K562 (cell line): ENCODE measurements at regions of chr7 and their contacts with region 1.

Region 1: DNA sequence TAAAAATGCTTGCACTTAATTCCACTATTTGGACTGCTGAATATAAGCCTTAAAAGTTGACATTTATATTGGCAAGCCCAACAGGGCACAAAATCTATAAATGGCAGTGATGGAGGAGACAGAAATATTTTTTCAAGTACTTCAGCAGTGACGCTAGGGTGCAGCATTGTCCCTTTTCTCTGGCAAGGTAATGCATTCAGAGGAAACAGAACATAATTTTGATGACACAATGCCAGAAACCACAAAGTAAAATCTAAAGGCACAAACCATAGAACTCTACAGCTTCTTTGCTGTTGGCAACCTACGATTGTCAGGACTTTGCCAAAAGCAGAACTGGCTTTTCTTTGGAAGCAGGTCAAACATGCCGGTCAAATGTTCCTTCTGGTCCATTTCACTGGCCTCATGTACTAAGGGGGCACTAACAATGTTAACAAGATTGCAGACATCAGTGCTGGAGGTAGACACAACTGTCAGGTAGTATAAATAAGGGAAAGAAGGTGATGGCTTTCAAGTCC is 30.9 kb upstream of the FAM133B start:
- DNase-seq: peak in 3 of 4 experiments; percentile 32 to 74 (median 40)
- ATAC-seq: peak; percentile 91
- H3K4me3 ChIP-seq: no peak overlapping the region
- H3K27ac ChIP-seq: no peak overlapping the region
- H3K4me1 ChIP-seq: peaks cover 0 to 3% of the 10 kb centered on the region in 2 experiments; a peak in 1 of 5 replicates
- H3K27me3 ChIP-seq: no peaks in the 10 kb centered on the region
- CTCF ChIP-seq: peak; percentile 65 to 94 (median 83); a peak in 5 of 6 replicates
- EP300 ChIP-seq: no peak
- POLR2A ChIP-seq: no peak
- RAD21 ChIP-seq: peak; percentile 93 to 96

Region 2: GRCh38 chr7:92598310-92598981 is 22.6 kb before region 1 on chr7:
- CTCF ChIA-PET with region 1: no interaction called
- POLR2A ChIA-PET with region 1: no interaction called
- in situ Hi-C with region 1: no loop called
- intact Hi-C with region 1: no loop called
- DNase-seq: no peak
- ATAC-seq: no peak
- H3K4me3 ChIP-seq: no peak overlapping the region
- H3K27ac ChIP-seq: no peak overlapping the region
- H3K4me1 ChIP-seq: no peaks in the 10 kb centered on the region
- H3K27me3 ChIP-seq: peaks cover 0 to 4% of the 10 kb centered on the region in 2 experiments; a peak in 1 of 5 replicates
- CTCF ChIP-seq: no peak
- EP300 ChIP-seq: no peak
- POLR2A ChIP-seq: no peak
- RAD21 ChIP-seq: no peak

Region 3: DNA sequence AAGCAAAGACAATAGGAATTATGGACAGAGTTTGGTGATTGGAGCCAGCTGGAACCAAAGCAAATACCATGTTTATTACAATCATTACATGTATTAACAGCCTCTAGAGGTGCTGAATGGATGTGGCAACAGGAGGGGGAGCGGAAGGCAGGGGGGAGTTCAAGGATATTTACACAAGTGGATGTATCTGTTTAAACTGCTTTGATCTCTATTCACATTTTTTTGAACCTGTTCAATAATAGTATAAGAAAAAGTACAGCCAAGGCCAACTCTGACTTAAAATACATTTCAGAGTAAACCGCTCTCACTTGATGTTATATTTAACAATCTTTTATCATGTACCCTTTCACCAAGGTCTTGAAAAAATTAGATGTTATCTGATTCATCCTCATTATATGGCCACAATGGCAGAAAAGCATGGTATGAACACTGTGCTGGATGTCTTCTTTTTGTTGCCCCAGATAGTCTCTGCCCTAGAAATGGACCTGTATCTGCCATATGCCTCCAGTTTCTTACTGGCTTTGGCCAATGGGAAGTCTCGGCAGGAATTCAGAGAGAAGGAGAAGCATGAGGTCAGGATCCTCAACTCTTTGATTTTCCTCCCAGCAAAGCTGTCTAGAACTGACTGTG is 57.3 kb after region 1 on chr7:
- CTCF ChIA-PET with region 1: no interaction called
- POLR2A ChIA-PET with region 1: no interaction called
- in situ Hi-C with region 1: no loop called
- intact Hi-C with region 1: loop called (anchors 5 kb)
- DNase-seq: no peak
- ATAC-seq: no peak
- H3K4me3 ChIP-seq: no peak overlapping the region
- H3K27ac ChIP-seq: no peak overlapping the region
- H3K4me1 ChIP-seq: no peaks in the 10 kb centered on the region
- H3K27me3 ChIP-seq: no peaks in the 10 kb centered on the region
- CTCF ChIP-seq: no peak
- EP300 ChIP-seq: no peak
- POLR2A ChIP-seq: no peak
- RAD21 ChIP-seq: no peak

Region 4: DNA sequence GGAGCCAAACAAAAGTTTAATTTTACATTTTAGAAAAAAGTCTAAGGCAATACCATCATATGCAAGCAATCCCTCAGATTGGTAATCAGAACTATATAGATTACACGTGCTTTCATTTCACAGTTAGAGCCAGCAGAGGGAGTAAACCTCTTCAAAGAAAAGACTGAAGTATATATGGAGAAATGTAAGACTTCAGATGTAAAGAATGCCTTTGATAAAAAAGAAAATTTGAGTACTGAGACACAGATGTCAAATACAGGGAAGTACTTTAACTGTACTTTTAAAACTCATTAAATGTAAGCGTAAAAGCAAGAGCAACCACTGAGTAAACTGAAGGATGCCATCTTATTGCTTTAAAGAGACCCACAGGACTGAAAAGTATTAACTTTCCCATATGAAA is 70.5 kb after region 1 on chr7:
- CTCF ChIA-PET with region 1: no interaction called
- POLR2A ChIA-PET with region 1: no interaction called
- in situ Hi-C with region 1: no loop called
- intact Hi-C with region 1: loop called (anchors 1 kb)
- DNase-seq: peak; percentile 26 to 43 (median 32)
- ATAC-seq: peak; percentile 86
- H3K4me3 ChIP-seq: no peak overlapping the region
- H3K27ac ChIP-seq: no peak overlapping the region
- H3K4me1 ChIP-seq: peaks cover 7 to 11% of the 10 kb centered on the region in 2 experiments; a peak in 3 of 5 replicates
- H3K27me3 ChIP-seq: no peaks in the 10 kb centered on the region
- CTCF ChIP-seq: peak; percentile 25 to 63 (median 28); a peak in 3 of 6 replicates
- EP300 ChIP-seq: no peak
- POLR2A ChIP-seq: no peak
- RAD21 ChIP-seq: peak; percentile 55 to 77

Region 5: GRCh38 chr7:92833024-92833765 is 212.1 kb after region 1 on chr7:
- CTCF ChIA-PET with region 1: interaction called, 4 read pairs
- POLR2A ChIA-PET with region 1: no interaction called
- in situ Hi-C with region 1: no loop called
- intact Hi-C with region 1: loop called (anchors 1 kb)
- DNase-seq: peak; percentile 25 to 71 (median 35)
- ATAC-seq: peak; percentile 13; the same call in 1 of the 3 replicates
- H3K4me3 ChIP-seq: peak overlapping the region; percentile 56
- H3K27ac ChIP-seq: peak overlapping the region; percentile 90
- H3K4me1 ChIP-seq: peaks cover 0 to 31% of the 10 kb centered on the region in 2 experiments; a peak in 3 of 5 replicates
- H3K27me3 ChIP-seq: no peaks in the 10 kb centered on the region
- CTCF ChIP-seq: peak; percentile 43 to 69 (median 54)
- EP300 ChIP-seq: no peak
- POLR2A ChIP-seq: no peak
- RAD21 ChIP-seq: peak in 1 of 2 experiments; percentile 15; a peak in 2 of 4 replicates

Region 6: DNA sequence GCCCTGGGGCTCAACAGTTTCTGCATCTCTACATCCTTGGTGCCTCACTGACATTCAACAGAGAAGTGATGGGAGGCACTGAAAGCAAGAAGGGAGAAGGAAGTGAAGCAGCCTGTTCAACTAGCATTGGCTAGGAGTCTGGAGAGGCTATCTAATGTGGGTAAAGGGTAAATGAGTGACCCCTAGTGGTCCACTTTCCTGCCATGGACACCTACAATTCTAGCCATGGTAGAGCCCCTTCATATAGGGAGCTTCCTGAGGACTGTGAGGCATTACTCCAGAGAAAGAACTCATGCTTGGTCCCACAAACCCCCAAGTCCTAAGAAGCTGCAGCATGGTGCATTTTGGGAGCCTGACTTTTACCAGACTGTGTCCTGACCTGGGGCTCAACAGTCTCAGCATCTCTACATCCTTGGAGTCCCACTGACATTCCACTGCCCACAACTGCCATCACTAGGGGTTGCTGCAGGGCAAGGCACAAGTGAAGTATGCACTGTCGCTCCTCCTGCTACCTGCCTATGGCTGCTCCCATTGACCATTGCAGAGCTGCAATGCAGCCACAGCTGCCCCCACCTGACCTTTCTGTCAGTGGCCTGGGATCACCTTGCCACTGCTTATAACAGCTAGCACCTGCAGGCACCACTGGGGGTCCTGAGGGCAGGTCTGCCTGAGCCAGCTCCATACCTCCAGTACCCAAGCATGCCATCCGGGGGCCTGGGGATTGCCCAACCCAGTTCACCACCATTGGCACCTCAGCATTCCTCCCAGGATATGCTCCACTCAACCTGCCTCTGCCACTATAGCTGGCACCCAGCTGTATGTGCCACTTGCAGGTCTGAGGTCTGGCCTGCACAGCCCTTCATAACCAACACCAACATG is 259.4 kb after region 1 on chr7:
- CTCF ChIA-PET with region 1: interaction called, 5 read pairs
- POLR2A ChIA-PET with region 1: no interaction called
- in situ Hi-C with region 1: no loop called
- intact Hi-C with region 1: loop called (anchors 1 kb)
- DNase-seq: peak in 2 of 4 experiments; percentile 45 to 66
- ATAC-seq: peak; percentile 97
- H3K4me3 ChIP-seq: no peak overlapping the region
- H3K27ac ChIP-seq: no peak overlapping the region
- H3K4me1 ChIP-seq: no peaks in the 10 kb centered on the region
- H3K27me3 ChIP-seq: no peaks in the 10 kb centered on the region
- CTCF ChIP-seq: peak; percentile 53 to 72 (median 54)
- EP300 ChIP-seq: no peak
- POLR2A ChIP-seq: no peak
- RAD21 ChIP-seq: peak; percentile 31 to 81; a peak in 3 of 4 replicates

Region 7: DNA sequence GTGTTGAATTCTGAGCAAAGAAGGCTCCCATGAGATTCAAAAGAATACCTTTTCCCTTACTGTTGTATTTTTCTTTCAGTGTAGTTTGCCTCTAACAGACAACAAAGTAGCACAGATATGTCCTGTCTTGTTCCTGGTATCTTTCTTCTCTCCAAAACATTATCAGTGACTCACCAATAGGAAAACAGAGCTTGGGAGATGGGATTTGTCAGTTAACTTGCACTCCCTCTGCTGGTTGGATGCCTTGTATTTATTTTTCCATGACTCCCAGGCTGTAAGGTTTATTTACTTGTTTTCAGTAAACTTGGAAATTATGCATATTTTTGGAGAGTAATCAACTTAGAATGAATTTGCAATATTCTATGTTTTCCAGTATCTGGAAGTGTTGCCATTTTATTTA is 367.0 kb after region 1 on chr7:
- CTCF ChIA-PET with region 1: no interaction called
- POLR2A ChIA-PET with region 1: no interaction called
- in situ Hi-C with region 1: no loop called
- intact Hi-C with region 1: loop called (anchors 10 kb)
- DNase-seq: peak; percentile 31 to 43 (median 38)
- ATAC-seq: peak; percentile 49; the same call in 2 of the 3 replicates
- H3K4me3 ChIP-seq: no peak overlapping the region
- H3K27ac ChIP-seq: no peak overlapping the region
- H3K4me1 ChIP-seq: peaks cover 0 to 3% of the 10 kb centered on the region in 2 experiments; a peak in 1 of 5 replicates
- H3K27me3 ChIP-seq: no peaks in the 10 kb centered on the region
- CTCF ChIP-seq: peak in 2 of 3 experiments; percentile 30 to 48; a peak in 2 of 6 replicates
- EP300 ChIP-seq: no peak
- POLR2A ChIP-seq: no peak
- RAD21 ChIP-seq: peak in 1 of 2 experiments; percentile 60; a peak in 2 of 4 replicates

Region 8: DNA sequence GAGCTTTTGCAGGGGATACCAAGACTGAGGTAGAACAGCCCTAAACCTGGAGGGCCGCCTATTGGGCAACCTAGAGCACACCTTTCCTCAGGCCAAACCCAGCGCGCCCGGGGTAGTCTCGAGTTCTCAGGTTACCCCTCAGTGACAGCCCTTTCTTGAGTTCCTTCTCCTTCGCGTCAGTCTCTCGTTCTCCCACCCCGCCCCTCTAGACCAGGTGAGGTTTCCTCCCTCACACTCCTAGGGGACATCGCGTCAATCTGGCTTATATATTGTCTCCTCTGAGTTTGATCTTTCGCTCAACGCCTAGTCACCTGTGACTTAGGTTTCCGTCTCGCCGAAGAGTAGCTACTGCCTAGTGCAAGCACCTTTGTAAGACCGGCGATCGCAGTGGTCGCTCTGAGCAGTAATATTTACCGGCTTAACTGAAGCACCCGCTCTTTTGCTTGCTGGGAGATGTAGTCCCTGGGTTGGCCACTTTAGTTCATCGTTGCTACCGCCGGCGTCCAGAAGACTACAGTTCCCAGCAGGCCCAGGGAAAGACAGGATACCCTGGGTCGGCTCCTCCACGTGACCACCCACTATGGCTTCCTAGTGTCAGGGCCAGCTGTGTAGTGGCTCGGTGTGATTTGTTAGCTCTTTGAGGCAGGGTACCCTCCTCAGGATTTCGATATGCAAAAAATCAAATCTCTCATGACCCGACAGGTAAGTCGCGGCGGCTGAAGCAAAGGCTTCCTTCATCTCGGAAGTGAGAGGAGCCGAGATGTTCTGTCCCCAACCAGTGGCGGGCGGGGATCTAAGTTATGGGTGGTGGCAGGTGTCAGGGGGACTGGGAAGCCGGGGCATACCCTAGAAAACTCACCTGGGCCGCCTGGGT is 611.0 kb after region 1 on chr7 and contains the start of gene VPS50:
- CTCF ChIA-PET with region 1: no interaction called
- POLR2A ChIA-PET with region 1: no interaction called
- in situ Hi-C with region 1: no loop called
- intact Hi-C with region 1: loop called (anchors 10 kb)
- DNase-seq: peak; percentile 93 to 97 (median 94)
- ATAC-seq: peak; percentile 98
- H3K4me3 ChIP-seq: peak within 1 kb of the TSS; percentile 62
- H3K27ac ChIP-seq: peak within 1 kb of the TSS; percentile 66
- H3K4me1 ChIP-seq: no peaks in the 10 kb centered on the region; a peak in 3 of 5 replicates
- H3K27me3 ChIP-seq: no peaks in the 10 kb centered on the region
- CTCF ChIP-seq: peak in 1 of 3 experiments; percentile 35; a peak in 2 of 6 replicates
- EP300 ChIP-seq: no peak
- POLR2A ChIP-seq: peak; percentile 89
- RAD21 ChIP-seq: no peak; a peak in 1 of 4 replicates
- polyA plus RNA-seq, gene VPS50: 10.5 to 14.9 TPM